Dorsolateral prefrontal cortex (tissue), 120 donors: ENCODE measurements at regions of chr19 and their contacts with region 1.

Region 1: DNA sequence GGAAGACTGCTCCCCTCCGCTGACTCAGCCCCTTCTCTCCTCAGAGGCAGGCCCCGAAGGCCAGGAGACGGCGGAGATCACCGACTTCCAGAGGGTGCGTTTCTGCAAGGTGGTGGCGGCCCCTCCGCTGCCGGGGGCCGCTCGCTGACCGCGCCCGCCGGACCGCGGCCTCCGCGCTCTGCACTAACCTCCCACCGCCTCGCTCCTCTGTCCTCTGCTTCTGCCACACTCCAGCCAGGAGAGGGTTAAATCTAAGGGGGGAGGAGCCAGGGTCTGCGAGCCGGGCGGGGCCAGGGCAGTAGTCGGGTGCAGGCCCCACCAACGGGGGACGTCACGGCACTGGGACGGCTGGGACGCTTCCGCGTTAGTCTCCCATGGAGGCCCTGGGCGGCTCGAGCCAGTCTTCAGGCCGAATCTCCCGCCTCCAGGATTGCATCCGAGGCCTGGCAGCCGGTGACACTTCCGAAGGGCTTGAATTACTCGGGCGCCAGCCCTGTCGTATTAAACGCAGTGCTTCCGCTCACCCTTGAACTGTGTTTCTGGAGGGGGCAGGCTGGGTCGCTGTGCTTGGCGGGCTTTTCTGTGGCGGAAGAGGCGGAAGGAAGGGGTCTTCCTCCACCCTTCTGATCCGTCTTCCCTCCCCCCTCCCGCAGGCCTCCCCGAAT is 1.2 kb upstream of the INAFM1 start:
- DNase-seq: peak; percentile 82 to 94 (median 91)
- H3K4me3 ChIP-seq: peak overlapping the region; percentile 62 to 96 (median 81)
- H3K27ac ChIP-seq: peak overlapping the region; percentile 68 to 99 (median 96)
- H3K27me3 ChIP-seq: no peaks in the 10 kb centered on the region
- CTCF ChIP-seq: peak in 9 of 56 donors; percentile 4 to 20 (median 6)

Region 2: DNA sequence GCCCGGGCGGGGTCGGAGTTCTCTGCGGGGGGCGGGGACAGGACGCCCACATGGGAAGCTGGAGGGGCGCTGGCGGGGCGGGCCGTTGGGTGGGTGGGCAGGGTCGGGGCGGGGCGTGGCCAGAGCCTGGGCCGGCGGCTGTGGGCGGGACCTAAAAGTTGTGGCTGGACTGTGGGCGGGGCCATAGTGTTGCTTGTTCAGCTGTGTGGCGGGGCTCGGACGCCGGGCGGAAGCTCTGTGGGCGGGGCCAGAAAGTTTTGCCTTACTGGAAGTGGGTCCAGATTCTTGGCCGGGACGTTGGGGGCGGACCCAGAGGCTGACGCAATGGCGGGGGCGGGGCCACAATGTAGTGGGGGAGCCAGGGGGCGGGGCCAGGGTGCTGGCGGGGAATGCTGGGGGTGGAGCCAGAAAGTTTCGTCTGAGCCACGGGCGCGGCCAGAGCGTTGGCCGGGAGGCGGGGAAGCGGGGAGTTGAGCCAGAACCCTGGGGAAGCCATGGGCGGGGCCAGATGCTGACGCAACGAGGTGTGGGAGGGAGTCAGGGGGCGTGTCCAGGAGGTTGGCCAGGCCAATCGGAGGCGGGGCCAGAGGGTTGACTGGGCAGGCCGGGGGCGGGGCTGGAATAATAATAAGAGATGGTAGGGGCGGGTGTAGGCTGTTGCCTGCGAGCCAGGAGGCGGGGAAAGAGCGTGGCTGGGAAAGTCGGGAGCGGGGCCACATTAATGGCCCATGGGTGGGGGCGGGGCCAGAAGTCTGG is 16.6 kb before region 1 on chr19:
- intact Hi-C with region 1: loop called in 1 of 2 experiments (anchors 1 kb)
- DNase-seq: peak; percentile 86 to 100 (median 99)
- H3K4me3 ChIP-seq: peak overlapping the region; percentile 48 to 98 (median 73)
- H3K27ac ChIP-seq: peak overlapping the region; percentile 71 to 98 (median 90)
- H3K27me3 ChIP-seq: no peaks in the 10 kb centered on the region
- CTCF ChIP-seq: peak in 5 of 56 donors; percentile 9 to 14 (median 11)

Region 3: GRCh38 chr19:47296036-47296435 is 22.6 kb after region 1 on chr19:
- intact Hi-C with region 1: no loop called
- DNase-seq: peak in 8 of 10 donors; percentile 28 to 85 (median 70)
- H3K4me3 ChIP-seq: no peak overlapping the region
- H3K27ac ChIP-seq: no peak overlapping the region
- H3K27me3 ChIP-seq: no peaks in the 10 kb centered on the region
- CTCF ChIP-seq: peak; percentile 69 to 90 (median 81)

Region 4: GRCh38 chr19:47428177-47428894 is 154.9 kb after region 1 on chr19:
- intact Hi-C with region 1: no loop called
- DNase-seq: peak; percentile 64 to 95 (median 88)
- H3K4me3 ChIP-seq: peak overlapping the region in 42 of 59 donors; percentile 5 to 54 (median 28)
- H3K27ac ChIP-seq: peak overlapping the region in 10 of 59 donors; percentile 4 to 43 (median 14)
- H3K27me3 ChIP-seq: peaks cover 0 to 60% (median 15%) of the 10 kb centered on the region in 45 donors
- CTCF ChIP-seq: no peak